Activated naive CD4-positive, alpha-beta T cell treated with anti-CD3 and anti-CD28 coated beads for 36 hours (primary cell): ENCODE measurements at regions of chr4 and their contacts with region 1.

Region 1: DNA sequence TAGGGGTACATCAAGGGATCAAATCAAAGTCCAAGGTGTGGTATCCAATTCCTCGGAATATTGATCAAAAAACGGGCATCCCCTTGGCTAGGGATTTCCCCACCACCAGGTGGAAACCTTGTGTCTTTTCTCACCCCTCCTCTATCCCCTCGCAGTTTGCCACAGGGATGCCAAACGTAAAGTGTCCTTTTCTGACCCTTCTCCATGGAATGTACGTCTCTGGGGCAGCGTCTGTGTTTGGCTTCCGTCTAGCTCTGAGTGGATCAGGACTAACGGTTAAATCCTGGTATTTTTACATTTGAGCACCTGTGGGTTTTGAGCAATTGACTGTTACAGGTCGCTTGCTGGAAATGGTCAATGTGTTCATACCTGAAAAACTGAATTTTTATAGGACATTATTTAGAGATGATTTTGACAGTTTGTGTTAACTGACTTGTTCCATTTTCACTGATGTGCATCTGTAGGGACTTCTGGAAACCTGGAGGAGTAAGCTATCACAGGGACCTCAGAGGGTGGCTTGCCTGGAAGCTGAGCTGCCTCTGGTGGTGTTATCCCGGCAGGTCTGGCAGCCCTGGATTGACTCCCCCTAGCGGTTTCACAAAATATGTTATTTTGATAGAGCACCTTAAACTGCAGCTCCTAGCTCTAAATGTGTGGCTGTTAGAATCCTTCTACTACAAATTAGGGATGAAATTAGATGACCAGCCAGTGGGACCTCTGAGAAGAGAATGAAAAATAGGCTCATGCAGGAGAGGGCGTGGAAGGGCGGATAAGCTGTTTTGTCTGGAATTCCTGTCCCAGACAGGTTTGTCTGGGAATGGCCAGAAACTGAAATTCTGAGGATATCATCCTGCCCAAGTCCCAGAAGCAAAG is 8.8 kb upstream of the MGST2 start:
- DNase-seq: peak; percentile 67
- H3K4me3 Mint-ChIP-seq: peak overlapping the region; percentile 57
- H3K27ac Mint-ChIP-seq: peak overlapping the region; percentile 83
- H3K4me1 Mint-ChIP-seq: peaks cover 24% of the 10 kb centered on the region
- H3K27me3 Mint-ChIP-seq: peaks cover 2% of the 10 kb centered on the region

Region 2: GRCh38 chr4:139083956-139084803 is 572.7 kb before region 1 on chr4:
- CTCF ChIA-PET with region 1: no interaction called
- intact Hi-C with region 1: loop called (anchors 5 kb)
- DNase-seq: peak; percentile 90
- H3K4me3 Mint-ChIP-seq: peak overlapping the region; percentile 99
- H3K27ac Mint-ChIP-seq: peak overlapping the region; percentile 99
- H3K4me1 Mint-ChIP-seq: peaks cover 30% of the 10 kb centered on the region
- H3K27me3 Mint-ChIP-seq: no peaks in the 10 kb centered on the region

Region 3: GRCh38 chr4:139554893-139555704 is 101.8 kb before region 1 on chr4:
- CTCF ChIA-PET with region 1: interaction called, 10 read pairs
- intact Hi-C with region 1: loop called (anchors 1 kb)
- DNase-seq: peak; percentile 92
- H3K4me3 Mint-ChIP-seq: peak overlapping the region; percentile 94
- H3K27ac Mint-ChIP-seq: peak overlapping the region; percentile 90
- H3K4me1 Mint-ChIP-seq: peaks cover 41% of the 10 kb centered on the region
- H3K27me3 Mint-ChIP-seq: no peaks in the 10 kb centered on the region

Region 4: DNA sequence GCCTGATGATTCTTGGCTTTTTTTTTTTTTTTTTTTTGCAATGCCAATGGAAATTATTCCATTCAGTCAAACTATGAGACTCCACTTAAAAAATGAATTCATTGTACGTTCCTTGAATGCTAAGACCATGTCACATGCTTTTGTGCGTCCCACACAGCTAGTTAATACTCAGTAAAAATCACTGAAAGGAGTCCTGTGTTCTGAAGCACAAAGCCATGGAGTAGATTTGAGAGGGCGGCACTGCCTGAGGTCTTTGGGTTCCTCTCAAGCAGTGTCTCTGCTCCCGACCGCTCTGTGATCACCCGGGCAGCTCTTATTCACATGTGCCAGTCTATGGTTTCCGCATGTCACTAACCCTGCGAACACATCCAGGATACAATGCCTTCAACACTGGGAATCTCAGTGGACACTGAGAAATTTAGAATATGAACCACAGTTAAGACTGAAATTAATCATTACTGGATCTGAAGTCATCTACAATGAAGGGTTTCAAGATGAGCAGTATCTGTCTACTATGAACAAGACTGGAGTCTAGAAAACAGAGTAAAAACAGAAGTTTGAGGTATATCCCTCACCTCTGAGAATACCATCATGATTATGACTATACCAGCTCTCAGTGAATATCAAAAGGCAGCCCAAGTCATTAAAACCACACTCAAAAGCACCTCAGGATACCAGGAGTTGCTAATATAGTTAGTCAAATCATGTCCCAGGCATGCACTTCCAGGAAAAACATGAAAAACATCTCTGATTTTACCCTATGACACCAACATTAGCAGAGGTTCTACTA is 201.8 kb after region 1 on chr4:
- CTCF ChIA-PET with region 1: interaction called, 4 read pairs
- intact Hi-C with region 1: loop called (anchors 1 kb)
- DNase-seq: peak; percentile 55
- H3K4me3 Mint-ChIP-seq: no peak overlapping the region
- H3K27ac Mint-ChIP-seq: peak overlapping the region; percentile 22
- H3K4me1 Mint-ChIP-seq: peaks cover 19% of the 10 kb centered on the region
- H3K27me3 Mint-ChIP-seq: peaks cover 19% of the 10 kb centered on the region

Region 5: GRCh38 chr4:140049024-140049848 is 392.4 kb after region 1 on chr4:
- CTCF ChIA-PET with region 1: interaction called, 5 read pairs
- intact Hi-C with region 1: loop called (anchors 1 kb)
- DNase-seq: peak; percentile 78
- H3K4me3 Mint-ChIP-seq: peak overlapping the region; percentile 78
- H3K27ac Mint-ChIP-seq: peak overlapping the region; percentile 14
- H3K4me1 Mint-ChIP-seq: peaks cover 31% of the 10 kb centered on the region
- H3K27me3 Mint-ChIP-seq: peaks cover 2% of the 10 kb centered on the region

Region 6: GRCh38 chr4:140252742-140253555 is 596.1 kb after region 1 on chr4:
- CTCF ChIA-PET with region 1: interaction called, 8 read pairs
- intact Hi-C with region 1: loop called (anchors 1 kb)
- DNase-seq: peak; percentile 65
- H3K4me3 Mint-ChIP-seq: peak overlapping the region; percentile 5
- H3K27ac Mint-ChIP-seq: no peak overlapping the region
- H3K4me1 Mint-ChIP-seq: peaks cover 11% of the 10 kb centered on the region
- H3K27me3 Mint-ChIP-seq: peaks cover 6% of the 10 kb centered on the region